ENCODE measurements at regions of chr5 and their contacts with region 1.

Region 1: DNA sequence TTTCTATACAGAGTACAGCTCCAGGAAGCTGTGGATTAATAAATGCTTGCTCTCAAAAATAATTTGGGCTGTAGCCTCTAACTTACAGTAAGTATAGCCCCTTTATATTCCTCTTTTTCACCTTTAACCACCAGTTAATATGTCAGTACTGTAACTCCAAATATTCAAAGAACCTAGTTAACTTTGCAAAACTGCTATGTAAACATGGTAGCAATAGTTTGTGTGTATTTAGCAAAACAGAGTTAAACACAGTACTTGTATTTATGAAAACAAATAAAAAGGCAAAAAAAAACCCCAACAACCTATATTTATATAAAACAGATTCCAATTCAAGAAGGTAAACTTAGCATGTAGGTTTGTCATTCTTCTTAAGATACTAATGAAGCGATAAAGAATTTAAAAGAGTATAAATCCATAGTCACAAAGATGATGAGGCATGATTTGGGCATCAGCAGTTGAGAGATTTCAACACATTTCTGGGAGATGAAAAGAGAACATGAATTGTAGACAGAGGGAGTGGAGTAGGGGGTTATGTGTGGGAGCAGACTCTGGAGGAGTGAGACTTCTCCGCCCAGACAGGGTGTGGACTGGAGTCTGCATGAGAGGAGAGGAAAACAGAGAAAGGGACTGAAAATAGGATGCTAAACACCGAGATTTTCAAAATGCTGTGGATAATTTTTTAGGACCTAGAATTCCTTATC is 47.0 kb upstream of the F2RL1 start:
- DNase-seq: no peak
- H3K4me3 ChIP-seq: no peak overlapping the region
- H3K4me3 Mint-ChIP-seq: no peak overlapping the region
- H3K27ac ChIP-seq: no peak overlapping the region
- H3K27ac Mint-ChIP-seq: peak overlapping the region in 2 of 7 donors; percentile 43 to 52
- H3K4me1 ChIP-seq: peaks cover 3% of the 10 kb centered on the region
- H3K4me1 Mint-ChIP-seq: peaks cover 0 to 6% (median 4%) of the 10 kb centered on the region in 4 donors
- H3K27me3 ChIP-seq: no peaks in the 10 kb centered on the region
- H3K27me3 Mint-ChIP-seq: no peaks in the 10 kb centered on the region

Region 2: GRCh38 chr5:76210946-76211345 is 560.9 kb before region 1 on chr5:
- CTCF ChIA-PET with region 1: no interaction called
- POLR2A ChIA-PET with region 1: no interaction called
- intact Hi-C with region 1: no loop called
- DNase-seq: no peak
- H3K4me3 ChIP-seq: no peak overlapping the region
- H3K4me3 Mint-ChIP-seq: no peak overlapping the region
- H3K27ac ChIP-seq: no peak overlapping the region
- H3K27ac Mint-ChIP-seq: no peak overlapping the region
- H3K4me1 ChIP-seq: no peaks in the 10 kb centered on the region
- H3K4me1 Mint-ChIP-seq: no peaks in the 10 kb centered on the region
- H3K27me3 ChIP-seq: no peaks in the 10 kb centered on the region
- H3K27me3 Mint-ChIP-seq: peaks cover 0 to 3% of the 10 kb centered on the region in 2 donors

Region 3: GRCh38 chr5:76582230-76583162 is 189.4 kb before region 1 on chr5:
- CTCF ChIA-PET with region 1: interaction called, 10 read pairs
- POLR2A ChIA-PET with region 1: no interaction called
- intact Hi-C with region 1: no loop called
- DNase-seq: no peak
- H3K4me3 ChIP-seq: no peak overlapping the region
- H3K4me3 Mint-ChIP-seq: no peak overlapping the region
- H3K27ac ChIP-seq: no peak overlapping the region
- H3K27ac Mint-ChIP-seq: peak overlapping the region in 6 of 7 donors; percentile 12 to 76 (median 46)
- H3K4me1 ChIP-seq: peaks cover 16% of the 10 kb centered on the region
- H3K4me1 Mint-ChIP-seq: peaks cover 13 to 37% (median 18%) of the 10 kb centered on the region in 4 donors
- H3K27me3 ChIP-seq: no peaks in the 10 kb centered on the region
- H3K27me3 Mint-ChIP-seq: no peaks in the 10 kb centered on the region

Region 4: DNA sequence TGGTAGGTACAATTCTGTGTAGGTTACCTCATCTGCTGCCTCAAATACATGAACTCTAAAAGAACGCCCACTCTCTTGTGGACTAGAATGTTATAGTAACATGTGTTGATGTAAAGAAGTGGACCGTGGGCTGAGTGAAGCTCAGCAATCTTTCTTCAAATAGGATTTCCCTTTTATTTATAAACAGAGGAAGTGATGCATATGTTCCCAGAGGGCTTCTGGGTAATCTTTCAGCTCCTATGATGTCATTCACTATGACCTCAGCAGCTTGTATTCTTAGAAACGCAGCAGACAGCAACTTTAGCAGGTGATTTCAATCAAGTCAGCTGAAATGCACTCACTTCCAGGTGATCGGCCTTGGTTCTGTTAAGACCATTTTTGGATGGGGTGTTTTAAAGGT is 163.0 kb before region 1 on chr5:
- CTCF ChIA-PET with region 1: interaction called, 148 read pairs
- POLR2A ChIA-PET with region 1: no interaction called
- intact Hi-C with region 1: no loop called
- DNase-seq: peak in 4 of 5 donors; percentile 6 to 46 (median 26)
- H3K4me3 ChIP-seq: no peak overlapping the region
- H3K4me3 Mint-ChIP-seq: no peak overlapping the region
- H3K27ac ChIP-seq: no peak overlapping the region
- H3K27ac Mint-ChIP-seq: peak overlapping the region in 6 of 7 donors; percentile 18 to 90 (median 64)
- H3K4me1 ChIP-seq: peaks cover 16% of the 10 kb centered on the region
- H3K4me1 Mint-ChIP-seq: peaks cover 6 to 18% (median 11%) of the 10 kb centered on the region in 4 donors
- H3K27me3 ChIP-seq: no peaks in the 10 kb centered on the region
- H3K27me3 Mint-ChIP-seq: no peaks in the 10 kb centered on the region

Region 5: DNA sequence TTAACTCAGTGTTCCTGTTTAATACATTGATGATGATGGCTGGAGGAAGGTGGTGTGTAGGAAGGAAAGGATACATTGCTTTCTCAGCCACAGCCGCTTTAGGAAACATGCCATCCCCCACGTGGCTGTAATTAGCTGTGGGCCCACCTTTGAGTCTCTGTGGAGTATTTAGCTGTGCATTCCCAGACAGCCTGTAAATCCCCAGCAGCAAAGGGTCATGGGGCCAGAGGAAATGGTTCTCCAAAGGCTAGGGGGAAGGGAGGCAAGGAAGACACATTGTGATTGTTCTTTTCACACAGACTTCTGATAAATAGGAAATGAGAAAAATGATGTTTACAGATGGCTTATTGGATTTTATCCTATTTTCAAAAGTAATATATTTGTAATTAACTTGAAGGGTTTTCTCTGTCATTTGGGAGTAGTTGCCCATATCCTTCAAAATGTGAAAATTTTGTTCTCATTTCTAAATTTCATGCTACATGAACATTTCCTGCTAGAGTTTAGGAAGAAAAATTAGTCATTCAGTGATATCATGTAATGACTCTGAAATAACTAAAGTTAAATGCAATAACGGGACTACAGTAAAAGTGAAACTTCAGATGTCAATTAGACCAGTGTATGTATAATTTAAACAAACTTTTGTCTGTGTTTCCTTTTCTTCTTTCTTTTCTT is 80.3 kb before region 1 on chr5:
- CTCF ChIA-PET with region 1: interaction called, 20 read pairs
- POLR2A ChIA-PET with region 1: interaction called, 9 read pairs
- intact Hi-C with region 1: no loop called
- DNase-seq: no peak
- H3K4me3 ChIP-seq: no peak overlapping the region
- H3K4me3 Mint-ChIP-seq: no peak overlapping the region
- H3K27ac ChIP-seq: no peak overlapping the region
- H3K27ac Mint-ChIP-seq: peak overlapping the region in 3 of 7 donors; percentile 37 to 81 (median 42)
- H3K4me1 ChIP-seq: no peaks in the 10 kb centered on the region
- H3K4me1 Mint-ChIP-seq: peaks cover 0 to 11% (median 4%) of the 10 kb centered on the region in 4 donors
- H3K27me3 ChIP-seq: no peaks in the 10 kb centered on the region
- H3K27me3 Mint-ChIP-seq: no peaks in the 10 kb centered on the region

Region 6: DNA sequence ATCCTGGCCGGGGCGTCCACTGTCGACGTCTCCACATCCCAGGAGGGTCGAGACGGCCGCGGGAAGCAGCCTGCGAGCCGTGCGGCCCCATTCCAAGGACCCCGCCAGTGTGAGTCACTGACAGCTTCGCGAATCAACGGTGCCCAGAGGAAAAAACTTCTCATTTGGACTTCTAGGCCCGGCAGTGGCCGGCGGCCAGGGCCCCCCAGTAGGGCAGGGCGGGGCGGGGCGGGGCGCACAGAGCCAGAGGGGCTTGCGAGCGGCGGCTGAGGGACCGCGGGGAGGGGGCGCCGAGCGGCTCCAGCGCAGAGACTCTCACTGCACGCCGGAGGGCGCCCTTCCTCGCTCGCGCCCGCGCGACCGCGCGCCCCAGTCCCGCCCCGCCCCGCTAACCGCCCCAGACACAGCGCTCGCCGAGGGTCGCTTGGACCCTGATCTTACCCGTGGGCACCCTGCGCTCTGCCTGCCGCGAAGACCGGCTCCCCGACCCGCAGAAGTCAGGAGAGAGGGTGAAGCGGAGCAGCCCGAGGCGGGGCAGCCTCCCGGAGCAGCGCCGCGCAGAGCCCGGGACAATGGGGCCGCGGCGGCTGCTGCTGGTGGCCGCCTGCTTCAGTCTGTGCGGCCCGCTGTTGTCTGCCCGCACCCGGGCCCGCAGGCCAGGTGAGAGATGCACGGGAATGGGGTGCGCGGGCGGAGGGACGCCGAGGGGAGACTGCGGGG is 56.0 kb before region 1 on chr5 and contains the start of gene F2R:
- CTCF ChIA-PET with region 1: interaction called, 95 read pairs
- POLR2A ChIA-PET with region 1: interaction called, 14 read pairs
- intact Hi-C with region 1: loop called (anchors 1 kb)
- DNase-seq: peak; percentile 51 to 58 (median 57)
- H3K4me3 ChIP-seq: peak within 1 kb of the TSS in 1 of 2 donors; percentile 75
- H3K4me3 Mint-ChIP-seq: peak within 1 kb of the TSS; percentile 67 to 90 (median 86)
- H3K27ac ChIP-seq: peak within 1 kb of the TSS; percentile 51
- H3K27ac Mint-ChIP-seq: peak within 1 kb of the TSS; percentile 22 to 80 (median 66)
- H3K4me1 ChIP-seq: peaks cover 26% of the 10 kb centered on the region
- H3K4me1 Mint-ChIP-seq: peaks cover 13 to 43% (median 24%) of the 10 kb centered on the region in 4 donors
- H3K27me3 ChIP-seq: no peaks in the 10 kb centered on the region
- H3K27me3 Mint-ChIP-seq: peaks cover 0 to 7% of the 10 kb centered on the region in 2 donors
- total RNA-seq, gene F2R: 12.4 to 14.6 TPM

Region 7: DNA sequence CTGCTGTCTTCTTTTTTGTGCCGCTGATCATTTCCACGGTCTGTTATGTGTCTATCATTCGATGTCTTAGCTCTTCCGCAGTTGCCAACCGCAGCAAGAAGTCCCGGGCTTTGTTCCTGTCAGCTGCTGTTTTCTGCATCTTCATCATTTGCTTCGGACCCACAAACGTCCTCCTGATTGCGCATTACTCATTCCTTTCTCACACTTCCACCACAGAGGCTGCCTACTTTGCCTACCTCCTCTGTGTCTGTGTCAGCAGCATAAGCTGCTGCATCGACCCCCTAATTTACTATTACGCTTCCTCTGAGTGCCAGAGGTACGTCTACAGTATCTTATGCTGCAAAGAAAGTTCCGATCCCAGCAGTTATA is 38.8 kb before region 1 on chr5:
- CTCF ChIA-PET with region 1: interaction called, 83 read pairs
- POLR2A ChIA-PET with region 1: interaction called, 28 read pairs
- intact Hi-C with region 1: no loop called
- DNase-seq: peak; percentile 65 to 88 (median 70)
- H3K4me3 ChIP-seq: peak overlapping the region in 1 of 2 donors; percentile 8
- H3K4me3 Mint-ChIP-seq: peak overlapping the region; percentile 44 to 80 (median 78)
- H3K27ac ChIP-seq: peak overlapping the region; percentile 65
- H3K27ac Mint-ChIP-seq: peak overlapping the region; percentile 77 to 95 (median 90)
- H3K4me1 ChIP-seq: peaks cover 48% of the 10 kb centered on the region
- H3K4me1 Mint-ChIP-seq: peaks cover 18 to 48% (median 32%) of the 10 kb centered on the region in 4 donors
- H3K27me3 ChIP-seq: no peaks in the 10 kb centered on the region
- H3K27me3 Mint-ChIP-seq: no peaks in the 10 kb centered on the region

Region 8: GRCh38 chr5:76785487-76785886 is 13.6 kb after region 1 on chr5:
- CTCF ChIA-PET with region 1: interaction called, 18 read pairs
- POLR2A ChIA-PET with region 1: interaction called, 4 read pairs
- intact Hi-C with region 1: no loop called
- DNase-seq: no peak
- H3K4me3 ChIP-seq: no peak overlapping the region
- H3K4me3 Mint-ChIP-seq: no peak overlapping the region
- H3K27ac ChIP-seq: no peak overlapping the region
- H3K27ac Mint-ChIP-seq: no peak overlapping the region
- H3K4me1 ChIP-seq: peaks cover 5% of the 10 kb centered on the region
- H3K4me1 Mint-ChIP-seq: peaks cover 3 to 8% (median 8%) of the 10 kb centered on the region in 4 donors
- H3K27me3 ChIP-seq: no peaks in the 10 kb centered on the region
- H3K27me3 Mint-ChIP-seq: no peaks in the 10 kb centered on the region

Region 9: DNA sequence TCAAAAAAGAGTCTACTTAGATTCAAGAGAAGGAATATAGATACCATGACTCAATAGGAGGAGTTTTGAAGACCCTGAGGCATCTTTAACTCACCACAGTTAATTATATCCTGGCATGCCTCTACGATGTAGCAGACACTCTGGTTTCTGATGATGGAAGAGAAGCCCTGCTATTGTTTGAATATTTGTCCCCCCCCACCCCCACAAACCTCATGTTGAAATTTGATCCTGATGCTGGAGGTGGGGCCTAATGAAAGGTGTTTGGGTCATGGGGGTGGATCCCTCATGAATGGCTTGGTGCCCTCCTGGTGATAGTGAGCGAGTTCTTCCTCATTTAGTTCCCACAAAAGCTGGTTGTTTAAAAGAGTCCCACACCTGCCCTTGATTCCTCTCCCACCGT is 1152.2 kb after region 1 on chr5:
- CTCF ChIA-PET with region 1: no interaction called
- POLR2A ChIA-PET with region 1: no interaction called
- intact Hi-C with region 1: no loop called
- DNase-seq: no peak
- H3K4me3 ChIP-seq: no peak overlapping the region
- H3K4me3 Mint-ChIP-seq: no peak overlapping the region
- H3K27ac ChIP-seq: no peak overlapping the region
- H3K27ac Mint-ChIP-seq: peak overlapping the region in 1 of 7 donors; percentile 70
- H3K4me1 ChIP-seq: no peaks in the 10 kb centered on the region
- H3K4me1 Mint-ChIP-seq: peaks cover 4 to 10% (median 7%) of the 10 kb centered on the region in 4 donors
- H3K27me3 ChIP-seq: no peaks in the 10 kb centered on the region
- H3K27me3 Mint-ChIP-seq: peaks cover 0 to 4% of the 10 kb centered on the region in 2 donors